ENCODE measurements at regions of chr9 and their contacts with region 1.

Region 1: DNA sequence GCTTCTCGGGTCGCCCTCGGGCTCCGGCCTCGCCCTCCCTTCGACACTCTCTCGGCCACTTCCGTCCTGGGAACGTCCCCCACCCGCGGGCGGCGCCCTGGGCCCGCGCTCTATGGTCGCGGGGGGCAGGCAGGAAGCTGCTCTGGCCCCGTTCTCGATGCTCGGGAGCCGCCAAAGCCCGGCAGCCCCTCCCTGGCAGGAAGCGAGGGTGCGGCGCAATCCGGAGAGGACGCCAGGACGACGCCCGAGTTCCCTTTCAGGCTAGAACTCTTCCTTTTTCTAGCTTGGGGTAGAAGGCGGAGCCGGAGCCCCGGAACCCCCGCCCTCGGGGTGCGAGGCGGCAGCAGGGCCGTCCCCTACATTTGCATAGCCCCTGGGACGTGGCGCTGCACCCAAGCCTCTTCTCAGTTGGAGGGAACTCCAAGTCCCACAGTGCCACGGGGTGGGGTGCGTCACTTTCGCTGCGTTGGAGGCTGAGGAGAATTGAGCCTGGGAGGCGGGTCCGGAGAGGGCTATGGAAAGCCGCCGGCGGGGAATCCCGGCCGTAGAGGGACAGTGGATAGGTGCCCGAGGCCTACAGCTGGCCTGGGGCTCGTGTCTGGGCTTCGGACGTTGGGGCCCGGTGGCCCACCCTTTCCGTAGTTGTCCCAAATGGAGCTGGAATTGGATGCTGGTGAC is at the starts of genes CREB3 and TLN1:
- DNase-seq: peak; percentile 98
- ATAC-seq: peak; percentile 87
- H3K4me3 Mint-ChIP-seq: no peak within 1 kb of the TSS
- H3K27ac Mint-ChIP-seq: peak within 1 kb of the TSS; percentile 93
- H3K4me1 Mint-ChIP-seq: peaks cover 21% of the 10 kb centered on the region
- H3K27me3 Mint-ChIP-seq: no peaks in the 10 kb centered on the region
- total RNA-seq, gene CREB3: 24.0 to 26.0 TPM
- total RNA-seq, gene TLN1: 217 to 238 TPM

Region 2: GRCh38 chr9:34458013-34458958 is 1274.0 kb before region 1 on chr9 and contains the starts of genes DNAI1 and FAM219A:
- CTCF ChIA-PET with region 1: no interaction called
- POLR2A ChIA-PET with region 1: no interaction called
- intact Hi-C with region 1: loop called in 1 of 2 experiments (anchors 5 kb)
- DNase-seq: peak; percentile 99
- ATAC-seq: peak; percentile 92
- H3K4me3 Mint-ChIP-seq: peak within 1 kb of the TSS; percentile 84
- H3K27ac Mint-ChIP-seq: peak within 1 kb of the TSS; percentile 75
- H3K4me1 Mint-ChIP-seq: peaks cover 45% of the 10 kb centered on the region
- H3K27me3 Mint-ChIP-seq: peaks cover 9% of the 10 kb centered on the region
- total RNA-seq, gene DNAI1: 0.34 TPM in 1 of 2 experiments, not detected in the other
- total RNA-seq, gene FAM219A: 9.7 to 12.9 TPM

Region 3: DNA sequence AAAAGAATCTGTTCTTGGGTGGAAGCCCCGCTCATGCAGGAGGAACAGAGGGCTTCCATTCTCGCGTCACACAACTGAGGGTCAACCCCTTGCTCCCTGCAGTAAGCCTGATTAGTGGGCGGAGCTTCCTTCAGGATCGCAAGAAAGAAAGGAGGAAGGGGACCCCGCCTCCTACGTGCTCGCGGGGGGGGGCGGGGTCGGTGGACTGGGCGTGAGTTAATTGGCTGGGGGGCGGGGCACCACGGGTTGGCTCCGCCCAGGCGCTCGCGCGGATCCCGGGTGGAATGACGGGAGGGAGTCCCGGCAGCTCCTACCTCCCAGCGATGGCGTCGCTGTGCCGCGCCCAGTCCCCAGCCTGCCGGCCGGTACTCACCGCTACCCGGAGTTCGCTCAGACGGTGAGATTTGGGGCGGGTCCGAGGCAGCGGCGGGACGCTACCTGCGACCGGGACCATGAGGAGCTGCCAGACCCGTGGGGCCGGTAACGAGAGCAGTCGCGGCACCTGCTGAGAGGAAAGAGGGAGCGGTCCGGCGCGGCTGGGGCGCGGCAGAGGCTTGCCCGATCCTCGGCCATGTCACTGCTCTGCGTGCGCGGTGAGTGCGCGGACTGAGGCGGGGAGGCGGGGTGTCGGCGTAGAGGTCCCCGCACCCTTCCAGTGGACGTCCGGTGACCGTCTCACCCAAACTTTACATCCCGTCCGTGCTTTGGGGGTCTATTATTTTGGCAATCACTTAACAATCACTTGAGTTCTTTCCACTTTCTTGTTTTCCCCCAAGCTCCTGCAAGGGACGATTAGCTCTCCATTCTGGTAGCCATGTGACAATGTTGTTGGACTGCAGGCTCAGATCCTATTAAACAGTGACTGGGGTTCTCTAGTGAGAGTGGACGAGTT is 570.3 kb before region 1 on chr9 and contains the start of gene UNC13B:
- CTCF ChIA-PET with region 1: no interaction called
- POLR2A ChIA-PET with region 1: no interaction called
- intact Hi-C with region 1: loop called in 1 of 2 experiments (anchors 5 kb)
- DNase-seq: peak; percentile 85
- ATAC-seq: peak; percentile 93
- H3K4me3 Mint-ChIP-seq: peak within 1 kb of the TSS; percentile 84
- H3K27ac Mint-ChIP-seq: peak within 1 kb of the TSS; percentile 4
- H3K4me1 Mint-ChIP-seq: peaks cover 22% of the 10 kb centered on the region
- H3K27me3 Mint-ChIP-seq: no peaks in the 10 kb centered on the region
- total RNA-seq, gene UNC13B: 2.7 to 4.0 TPM

Region 4: GRCh38 chr9:35538361-35539234 is 193.7 kb before region 1 on chr9:
- CTCF ChIA-PET with region 1: no interaction called
- POLR2A ChIA-PET with region 1: no interaction called
- intact Hi-C with region 1: no loop called
- DNase-seq: no peak
- ATAC-seq: no peak
- H3K4me3 Mint-ChIP-seq: no peak overlapping the region
- H3K27ac Mint-ChIP-seq: no peak overlapping the region
- H3K4me1 Mint-ChIP-seq: no peaks in the 10 kb centered on the region
- H3K27me3 Mint-ChIP-seq: peaks cover 4% of the 10 kb centered on the region

Region 5: GRCh38 chr9:35559792-35560530 is 172.3 kb before region 1 on chr9:
- CTCF ChIA-PET with region 1: no interaction called
- POLR2A ChIA-PET with region 1: no interaction called
- intact Hi-C with region 1: no loop called
- DNase-seq: no peak
- ATAC-seq: no peak
- H3K4me3 Mint-ChIP-seq: no peak overlapping the region
- H3K27ac Mint-ChIP-seq: no peak overlapping the region
- H3K4me1 Mint-ChIP-seq: no peaks in the 10 kb centered on the region
- H3K27me3 Mint-ChIP-seq: no peaks in the 10 kb centered on the region

Region 6: GRCh38 chr9:35616681-35617459 is 115.4 kb before region 1 on chr9:
- CTCF ChIA-PET with region 1: interaction called, 16 read pairs
- POLR2A ChIA-PET with region 1: interaction called, 3 read pairs
- intact Hi-C with region 1: loop called in 1 of 2 experiments (anchors 5 kb)
- DNase-seq: peak; percentile 80
- ATAC-seq: peak; percentile 74
- H3K4me3 Mint-ChIP-seq: peak overlapping the region; percentile 77
- H3K27ac Mint-ChIP-seq: peak overlapping the region; percentile 79
- H3K4me1 Mint-ChIP-seq: peaks cover 38% of the 10 kb centered on the region
- H3K27me3 Mint-ChIP-seq: no peaks in the 10 kb centered on the region

Region 7: DNA sequence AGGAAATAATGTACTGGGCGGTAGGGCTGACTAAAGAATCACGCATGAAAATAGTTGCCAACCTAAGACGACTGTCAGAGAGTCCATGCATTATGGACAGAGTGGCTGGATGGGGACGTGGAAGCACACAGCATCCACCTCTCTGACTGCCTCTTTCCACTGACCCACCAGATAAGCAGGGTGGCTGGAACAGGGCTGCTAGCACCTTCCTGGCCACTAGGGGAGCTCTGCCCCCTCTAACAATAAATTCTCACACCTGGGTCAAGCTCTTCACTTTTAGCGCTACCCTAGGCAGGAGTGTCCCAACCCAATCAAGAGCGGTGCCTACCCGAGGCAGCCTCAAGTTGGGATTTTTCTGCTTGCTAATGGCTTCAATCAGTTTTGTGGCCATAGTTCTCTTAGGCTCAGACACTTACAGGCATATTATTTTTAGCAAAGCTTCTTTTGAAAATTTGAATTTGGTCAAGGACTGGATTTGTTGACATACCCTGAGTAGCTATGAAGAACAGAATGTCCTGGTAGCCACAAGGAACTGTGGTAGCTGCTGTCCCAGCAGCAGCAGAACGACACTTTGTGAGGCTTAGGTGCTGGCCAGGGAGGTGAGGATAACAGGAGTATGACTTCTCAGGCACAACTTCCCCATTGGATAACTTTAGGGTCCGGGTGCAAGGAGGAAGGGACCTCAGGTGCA is 35.6 kb before region 1 on chr9:
- CTCF ChIA-PET with region 1: interaction called, 68 read pairs
- POLR2A ChIA-PET with region 1: no interaction called
- intact Hi-C with region 1: loop called in 1 of 2 experiments (anchors 2 kb)
- DNase-seq: peak; percentile 73
- ATAC-seq: peak; percentile 90
- H3K4me3 Mint-ChIP-seq: no peak overlapping the region
- H3K27ac Mint-ChIP-seq: no peak overlapping the region
- H3K4me1 Mint-ChIP-seq: peaks cover 1% of the 10 kb centered on the region
- H3K27me3 Mint-ChIP-seq: no peaks in the 10 kb centered on the region

Region 8: DNA sequence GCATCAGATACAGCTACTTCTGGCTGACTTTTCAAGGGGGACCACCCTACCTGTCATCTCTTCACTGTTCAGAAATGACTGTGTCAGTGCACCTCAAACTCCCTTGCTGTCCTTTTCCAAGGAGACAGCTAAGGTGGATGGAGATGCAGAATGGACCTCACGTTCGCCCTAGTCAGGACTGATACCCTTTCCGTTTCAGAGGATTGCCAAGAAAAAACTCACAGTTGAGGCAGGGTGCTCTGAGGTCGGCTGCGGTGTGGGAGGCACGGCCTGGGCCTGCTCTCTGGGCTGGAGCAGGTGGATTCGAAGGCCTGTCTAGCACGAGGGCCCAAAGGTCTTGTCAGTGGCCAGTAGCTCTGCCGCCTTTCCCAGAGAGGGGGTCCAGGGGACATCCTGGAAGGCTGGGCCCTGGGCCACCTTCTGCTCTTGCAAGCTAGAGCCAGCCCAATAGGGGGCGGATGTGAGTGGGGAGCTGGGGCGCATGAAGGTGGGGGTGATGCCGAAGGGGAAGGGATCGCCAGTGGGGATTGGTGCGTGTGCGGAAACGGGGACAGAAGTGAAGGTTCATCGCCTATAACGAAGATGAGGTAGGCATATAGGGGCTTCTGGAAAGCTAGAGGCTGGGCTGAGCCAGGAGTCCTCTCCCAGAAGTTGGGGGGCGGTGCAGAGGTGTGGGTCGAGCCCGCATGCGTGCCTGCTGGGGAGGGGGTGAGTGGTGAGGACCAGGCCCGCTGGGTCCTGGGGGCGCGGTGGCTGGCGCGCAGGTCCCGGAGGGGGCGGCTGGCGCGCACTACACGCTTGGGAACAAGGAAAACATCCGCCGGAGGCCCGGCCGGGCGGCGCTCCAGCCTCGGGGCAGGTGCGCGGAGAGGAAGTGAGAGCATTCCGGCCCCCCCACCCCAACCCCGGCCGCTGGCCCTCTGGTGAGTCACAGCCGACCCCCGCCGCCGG is 24.3 kb after region 1 on chr9:
- CTCF ChIA-PET with region 1: interaction called, 7 read pairs
- POLR2A ChIA-PET with region 1: no interaction called
- intact Hi-C with region 1: loop called in 1 of 2 experiments (anchors 2 kb)
- DNase-seq: peak; percentile 92
- ATAC-seq: peak; percentile 92
- H3K4me3 Mint-ChIP-seq: peak overlapping the region; percentile 97
- H3K27ac Mint-ChIP-seq: peak overlapping the region; percentile 94
- H3K4me1 Mint-ChIP-seq: peaks cover 34% of the 10 kb centered on the region
- H3K27me3 Mint-ChIP-seq: no peaks in the 10 kb centered on the region

Region 9: GRCh38 chr9:36023260-36024048 is 291.2 kb after region 1 on chr9:
- CTCF ChIA-PET with region 1: no interaction called
- POLR2A ChIA-PET with region 1: no interaction called
- intact Hi-C with region 1: no loop called
- DNase-seq: peak; percentile 83
- ATAC-seq: peak; percentile 90
- H3K4me3 Mint-ChIP-seq: no peak overlapping the region
- H3K27ac Mint-ChIP-seq: no peak overlapping the region
- H3K4me1 Mint-ChIP-seq: no peaks in the 10 kb centered on the region
- H3K27me3 Mint-ChIP-seq: no peaks in the 10 kb centered on the region

Region 10: DNA sequence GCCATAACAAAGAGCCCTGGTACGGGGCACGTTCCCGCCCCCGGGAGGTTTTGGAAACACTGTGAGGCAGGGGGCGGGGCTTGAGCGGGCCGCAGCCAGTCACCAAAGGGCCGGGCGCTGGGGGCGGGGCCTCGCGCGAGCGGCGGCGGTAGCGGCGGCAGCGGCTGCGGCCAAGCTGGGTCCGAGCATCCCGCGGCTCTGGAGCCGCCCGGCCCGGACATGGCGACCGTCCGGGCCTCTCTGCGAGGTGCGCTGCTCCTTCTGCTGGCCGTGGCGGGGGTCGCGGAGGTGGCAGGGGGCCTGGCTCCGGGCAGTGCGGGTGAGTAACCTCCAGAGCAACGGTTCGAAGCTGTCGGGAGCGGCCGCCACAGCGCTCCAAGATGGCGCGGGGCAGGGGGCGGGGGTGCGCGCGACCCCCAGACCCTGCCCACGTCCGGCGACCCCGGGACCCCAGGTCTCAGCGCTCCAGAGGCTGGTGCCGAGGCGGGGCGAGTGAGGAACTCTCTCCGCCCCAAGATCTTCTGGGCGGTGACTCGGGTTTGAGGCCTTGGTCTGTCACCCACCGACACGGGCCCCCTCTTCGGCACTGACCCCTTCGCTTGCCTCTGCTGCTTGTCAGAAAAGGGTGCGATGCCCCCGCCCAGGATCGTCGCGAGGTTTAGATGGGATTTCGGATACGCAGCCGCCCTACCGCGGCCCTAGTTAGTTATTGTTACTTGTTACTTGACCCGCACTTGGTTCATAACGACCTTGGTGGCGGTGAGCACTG is 304.7 kb after region 1 on chr9 and contains the start of gene RECK:
- CTCF ChIA-PET with region 1: interaction called, 6 read pairs
- POLR2A ChIA-PET with region 1: no interaction called
- intact Hi-C with region 1: loop called in 1 of 2 experiments (anchors 1 kb)
- DNase-seq: peak; percentile 95
- ATAC-seq: peak; percentile 96
- H3K4me3 Mint-ChIP-seq: peak within 1 kb of the TSS; percentile 83
- H3K27ac Mint-ChIP-seq: peak within 1 kb of the TSS; percentile 85
- H3K4me1 Mint-ChIP-seq: peaks cover 41% of the 10 kb centered on the region
- H3K27me3 Mint-ChIP-seq: no peaks in the 10 kb centered on the region
- total RNA-seq, gene RECK: 5.0 to 5.6 TPM